Common myeloid progenitor, CD34-positive (primary cell): ENCODE measurements at regions of chr14 and their contacts with region 1.

Region 1: DNA sequence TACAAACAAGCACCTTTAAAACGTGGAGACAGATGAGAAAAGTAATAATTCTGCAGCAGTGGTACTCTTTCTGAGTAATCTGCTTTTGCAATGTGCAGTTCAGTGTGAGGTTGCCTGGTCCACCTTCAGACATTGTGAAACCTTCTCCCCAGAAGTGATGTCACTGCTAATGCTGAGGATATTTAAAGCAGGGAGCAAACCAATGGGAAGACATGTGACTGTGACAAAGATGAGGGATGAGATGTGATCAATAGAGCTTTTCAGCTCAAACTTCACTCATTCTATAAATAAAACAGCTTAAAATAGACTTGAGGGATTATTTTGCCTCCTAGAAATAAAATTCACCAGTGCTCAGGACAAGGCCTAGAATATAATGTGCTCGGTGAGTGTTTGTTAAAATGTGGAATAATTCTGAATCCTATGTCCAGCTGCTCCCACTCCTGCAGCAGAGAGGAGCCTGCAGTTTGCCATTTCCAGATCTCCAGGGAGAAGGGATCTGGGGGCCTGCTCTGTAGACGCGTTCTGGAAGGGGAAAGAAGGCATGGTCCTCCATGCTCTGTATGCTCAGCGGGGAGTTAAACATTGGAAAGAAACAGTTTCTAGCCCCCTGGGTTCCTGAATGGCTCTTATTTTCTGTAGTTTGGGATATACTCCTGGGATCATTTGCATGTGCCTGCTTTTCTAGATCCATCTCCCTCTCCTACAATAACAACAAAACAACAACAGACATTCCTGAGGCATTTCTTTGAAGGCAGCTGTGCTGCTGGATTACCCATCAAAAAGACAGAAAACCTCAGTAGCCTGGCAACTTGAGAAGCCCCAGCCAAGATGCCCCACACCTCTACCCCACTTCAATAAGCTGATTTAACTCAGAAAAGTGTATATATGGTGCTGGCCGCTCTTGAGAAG is 8.9 kb downstream of the SLC7A8 start:
- DNase-seq: no peak
- H3K4me3 ChIP-seq: no peak overlapping the region
- H3K27ac ChIP-seq: no peak overlapping the region
- H3K4me1 ChIP-seq: peaks cover 0 to 12% (median 8%) of the 10 kb centered on the region in 4 experiments
- H3K27me3 ChIP-seq: no peaks in the 10 kb centered on the region

Region 2: DNA sequence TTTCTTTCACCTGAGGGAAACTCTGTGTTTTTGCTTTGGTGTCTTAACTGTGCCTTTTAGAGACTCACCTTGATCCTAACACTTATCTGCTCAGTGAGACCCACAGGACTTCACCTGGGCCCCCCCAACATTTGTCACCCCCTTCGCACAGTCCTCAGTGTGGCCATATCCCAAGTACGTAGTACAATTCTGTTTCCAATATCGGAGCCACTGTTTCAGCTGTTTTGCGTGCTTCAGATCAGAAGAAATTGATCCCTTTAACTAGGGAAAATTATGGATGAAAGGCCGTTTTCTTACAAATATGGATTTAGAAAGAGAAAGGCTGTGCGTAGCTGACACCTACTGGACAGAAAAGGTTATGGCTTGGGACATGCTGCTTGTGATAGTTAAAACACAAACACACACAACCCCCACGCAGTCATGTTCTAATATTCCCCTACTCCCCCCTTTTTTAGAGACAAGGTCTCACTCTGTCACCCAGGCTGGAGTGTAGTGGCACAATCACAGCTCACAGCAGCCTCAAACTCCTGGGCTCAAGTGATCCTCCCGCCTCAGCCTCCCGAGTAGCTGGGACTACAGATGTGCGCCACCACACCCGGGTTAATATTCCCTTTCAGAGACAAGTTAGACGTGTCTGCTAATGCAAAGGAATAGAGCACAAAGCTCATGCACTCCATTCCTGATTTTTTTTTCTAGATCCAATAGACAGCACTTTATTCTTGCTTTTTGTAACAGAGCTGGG is 12.6 kb after region 1 on chr14:
- CTCF ChIA-PET with region 1: interaction called, 46 read pairs
- POLR2A ChIA-PET with region 1: no interaction called
- DNase-seq: peak; percentile 66 to 77 (median 71)
- H3K4me3 ChIP-seq: no peak overlapping the region
- H3K27ac ChIP-seq: no peak overlapping the region
- H3K4me1 ChIP-seq: peaks cover 0 to 14% (median 7%) of the 10 kb centered on the region in 4 experiments
- H3K27me3 ChIP-seq: peaks cover 0 to 6% (median 0%) of the 10 kb centered on the region in 5 experiments

Region 3: GRCh38 chr14:23217032-23218020 is 42.8 kb after region 1 on chr14:
- CTCF ChIA-PET with region 1: no interaction called
- POLR2A ChIA-PET with region 1: no interaction called
- DNase-seq: no peak
- H3K4me3 ChIP-seq: no peak overlapping the region
- H3K27ac ChIP-seq: no peak overlapping the region
- H3K4me1 ChIP-seq: no peaks in the 10 kb centered on the region
- H3K27me3 ChIP-seq: no peaks in the 10 kb centered on the region